SK-N-SH (cell line): ENCODE measurements at regions of chr7 and their contacts with region 1.

Region 1: DNA sequence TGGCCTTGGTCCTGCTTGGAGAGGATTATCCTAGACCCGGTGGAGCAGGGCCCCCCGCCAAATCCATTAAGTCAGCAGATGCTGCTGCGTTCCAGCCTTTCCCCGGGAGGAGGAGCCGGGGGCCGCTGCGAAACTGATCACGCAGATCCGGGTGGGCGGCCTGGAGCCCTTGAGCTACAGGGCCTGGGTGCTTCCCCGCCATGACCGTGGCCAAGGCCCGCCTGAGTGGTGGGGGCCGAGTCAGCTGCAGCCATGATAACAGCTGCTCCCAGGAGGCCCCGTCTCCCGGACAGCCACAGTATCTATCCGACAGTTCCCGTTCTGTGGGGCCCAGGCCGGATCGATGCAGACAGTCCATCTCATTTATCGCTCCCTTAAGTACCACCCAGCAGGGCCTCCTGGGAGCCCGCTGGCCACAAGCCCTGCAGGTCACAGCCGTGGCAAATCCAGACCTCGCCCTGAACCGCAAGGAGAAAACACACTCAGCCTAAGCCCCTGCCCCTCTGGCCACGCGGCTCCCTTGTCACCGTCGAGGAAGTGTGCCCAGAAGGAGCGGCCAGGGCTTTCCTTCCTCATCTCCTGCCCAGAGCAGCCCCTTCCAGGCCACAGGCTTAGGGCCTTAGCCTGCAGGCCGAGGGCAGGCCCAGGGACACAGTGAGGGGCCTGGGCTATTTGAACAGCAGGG is 34.4 kb upstream of the SLC29A4 start:
- DNase-seq: no peak
- H3K4me3 ChIP-seq: no peak overlapping the region
- H3K27ac ChIP-seq: no peak overlapping the region
- H3K4me1 ChIP-seq: peaks cover 0 to under 1% of the 10 kb centered on the region in 2 experiments; a peak in 1 of 4 replicates
- H3K27me3 ChIP-seq: no peaks in the 10 kb centered on the region
- CTCF ChIP-seq: no peak
- EP300 ChIP-seq: no peak
- RAD21 ChIP-seq: no peak

Region 2: DNA sequence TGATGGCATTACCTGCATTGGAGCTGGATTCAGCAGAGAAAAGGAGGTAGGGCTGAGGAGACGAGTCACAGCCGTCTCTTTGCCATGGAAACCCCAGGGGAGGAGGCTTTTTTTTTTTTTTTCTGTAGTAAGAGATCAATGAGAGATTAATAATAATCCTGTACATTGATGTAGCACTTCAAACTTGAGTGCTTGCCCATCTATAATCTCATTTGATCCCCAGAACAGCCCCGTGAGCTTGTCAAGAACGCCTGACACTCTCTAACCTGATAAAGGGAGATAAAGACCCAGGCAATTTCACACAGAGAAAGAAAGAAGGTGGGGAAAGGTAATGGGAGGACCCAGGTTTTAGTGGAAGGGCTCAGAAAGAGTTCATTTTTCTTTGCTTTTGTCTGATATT is 761.4 kb before region 1 on chr7:
- CTCF ChIA-PET with region 1: no interaction called
- POLR2A ChIA-PET with region 1: no interaction called
- DNase-seq: peak; percentile 41
- H3K4me3 ChIP-seq: no peak overlapping the region
- H3K27ac ChIP-seq: no peak overlapping the region
- H3K4me1 ChIP-seq: peaks cover 0 to 5% of the 10 kb centered on the region in 2 experiments; a peak in 1 of 4 replicates
- H3K27me3 ChIP-seq: no peaks in the 10 kb centered on the region
- CTCF ChIP-seq: no peak
- EP300 ChIP-seq: no peak
- RAD21 ChIP-seq: no peak

Region 3: GRCh38 chr7:5177060-5177459 is 71.3 kb before region 1 on chr7:
- CTCF ChIA-PET with region 1: no interaction called
- POLR2A ChIA-PET with region 1: no interaction called
- DNase-seq: peak; percentile 88
- H3K4me3 ChIP-seq: peak overlapping the region; percentile 1 to 4; a peak in 1 of 4 replicates
- H3K27ac ChIP-seq: no peak overlapping the region; a peak in 1 of 4 replicates
- H3K4me1 ChIP-seq: peaks cover 0 to 8% of the 10 kb centered on the region in 2 experiments; a peak in 1 of 4 replicates
- H3K27me3 ChIP-seq: no peaks in the 10 kb centered on the region
- CTCF ChIP-seq: no peak
- EP300 ChIP-seq: no peak
- RAD21 ChIP-seq: no peak

Region 4: DNA sequence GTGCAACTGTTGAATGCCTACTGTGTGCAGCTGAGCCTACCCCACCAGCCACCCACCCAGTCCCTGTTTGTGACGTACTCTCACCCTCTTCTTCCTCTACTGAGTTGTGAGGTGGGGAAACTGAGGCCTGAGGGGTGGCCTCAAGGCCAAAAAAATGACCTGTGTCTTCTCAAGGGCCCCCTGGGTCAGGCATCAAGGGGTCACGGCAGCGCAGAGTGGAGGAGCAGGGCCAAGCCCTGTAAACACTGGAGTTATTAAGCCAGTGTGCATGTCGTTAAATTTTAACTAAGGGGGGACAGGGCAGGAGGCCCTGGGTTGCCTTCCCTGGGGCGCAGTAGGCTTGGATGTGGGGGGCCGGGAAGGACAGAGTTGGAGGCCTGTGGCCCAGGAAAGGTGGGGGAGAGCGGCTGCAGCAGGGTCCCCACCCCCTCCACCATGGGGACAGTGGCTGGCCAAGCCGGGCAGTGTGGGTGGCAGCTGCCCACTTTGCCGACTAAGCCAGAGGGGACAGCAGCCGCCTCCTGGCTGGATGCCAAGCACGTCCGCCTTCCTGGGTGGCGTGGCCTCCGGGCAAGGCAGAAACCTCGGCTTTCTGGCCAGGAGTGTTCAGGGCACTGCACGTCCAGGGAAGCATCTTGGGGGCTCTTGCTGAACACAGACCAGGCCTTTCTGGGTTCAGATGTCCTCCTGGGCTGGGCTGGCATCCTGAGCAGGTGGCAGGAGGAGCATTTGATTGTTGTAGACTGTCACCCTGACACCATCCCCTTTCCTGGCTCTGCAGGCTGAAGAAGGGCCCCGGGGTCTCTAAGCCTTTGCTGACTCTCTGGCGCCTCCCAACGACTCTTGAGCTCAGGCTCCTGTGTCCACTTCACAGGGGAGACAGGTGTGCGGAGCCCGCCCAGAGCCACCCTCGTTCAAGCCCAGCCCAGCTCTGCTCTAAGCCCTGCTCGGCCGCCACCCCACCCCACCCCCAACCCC is 36.2 kb after region 1 on chr7:
- CTCF ChIA-PET with region 1: interaction called, 34 read pairs
- POLR2A ChIA-PET with region 1: no interaction called
- DNase-seq: peak; percentile 90
- H3K4me3 ChIP-seq: peak overlapping the region in 1 of 2 experiments; percentile 63; a peak in 1 of 4 replicates
- H3K27ac ChIP-seq: peak overlapping the region in 1 of 2 experiments; percentile 87; a peak in 2 of 4 replicates
- H3K4me1 ChIP-seq: peaks cover 4 to 16% of the 10 kb centered on the region in 2 experiments; a peak in 1 of 4 replicates
- H3K27me3 ChIP-seq: no peaks in the 10 kb centered on the region
- CTCF ChIP-seq: peak; percentile 39; the same call in 1 of the 2 replicates
- EP300 ChIP-seq: peak in 1 of 2 experiments; percentile 59; a peak in 1 of 4 replicates
- RAD21 ChIP-seq: peak; percentile 86